SK-N-SH (cell line): ENCODE measurements at regions of chr1 and their contacts with region 1.

Region 1: DNA sequence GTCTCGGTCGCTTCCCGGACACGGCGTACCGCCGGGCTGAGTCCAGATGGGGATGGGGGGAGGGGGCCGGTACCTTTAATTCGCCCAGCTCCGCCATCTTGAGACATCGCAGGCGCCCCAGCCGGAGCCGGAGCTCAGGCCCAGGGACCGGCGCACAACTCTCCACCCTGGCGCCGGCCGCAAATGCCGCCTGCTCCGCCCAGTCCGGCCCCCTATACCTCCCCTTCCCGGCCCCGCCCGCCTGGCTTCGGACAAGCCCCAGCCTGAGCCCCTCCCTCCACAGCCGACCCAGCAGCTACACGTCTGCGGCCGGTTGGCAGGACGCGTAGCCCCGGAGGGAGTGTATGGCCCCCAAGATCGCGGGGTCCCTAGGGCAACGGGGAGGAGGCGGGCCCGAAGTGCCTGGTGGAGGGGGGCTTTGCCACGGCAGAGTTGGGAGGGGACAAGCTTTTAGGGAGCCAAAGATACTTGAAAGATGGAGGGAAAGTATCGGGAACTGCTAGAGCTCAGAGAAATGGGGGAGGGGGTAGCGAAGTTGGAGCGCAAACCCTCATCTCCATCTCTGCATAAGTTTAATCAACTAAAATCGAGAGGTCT is at the start of gene PIAS3:
- DNase-seq: peak; percentile 98
- H3K4me3 ChIP-seq: peak within 1 kb of the TSS; percentile 66 to 83
- H3K27ac ChIP-seq: peak within 1 kb of the TSS; percentile 83 to 95
- H3K4me1 ChIP-seq: peaks cover 8 to 9% of the 10 kb centered on the region in 2 experiments; a peak in 3 of 4 replicates
- H3K27me3 ChIP-seq: no peaks in the 10 kb centered on the region
- CTCF ChIP-seq: no peak
- EP300 ChIP-seq: peak in 1 of 2 experiments; percentile 3; a peak in 1 of 4 replicates
- RAD21 ChIP-seq: no peak
- polyA plus RNA-seq, gene PIAS3: 35.5 and 39.1 TPM in 2 replicates

Region 2: DNA sequence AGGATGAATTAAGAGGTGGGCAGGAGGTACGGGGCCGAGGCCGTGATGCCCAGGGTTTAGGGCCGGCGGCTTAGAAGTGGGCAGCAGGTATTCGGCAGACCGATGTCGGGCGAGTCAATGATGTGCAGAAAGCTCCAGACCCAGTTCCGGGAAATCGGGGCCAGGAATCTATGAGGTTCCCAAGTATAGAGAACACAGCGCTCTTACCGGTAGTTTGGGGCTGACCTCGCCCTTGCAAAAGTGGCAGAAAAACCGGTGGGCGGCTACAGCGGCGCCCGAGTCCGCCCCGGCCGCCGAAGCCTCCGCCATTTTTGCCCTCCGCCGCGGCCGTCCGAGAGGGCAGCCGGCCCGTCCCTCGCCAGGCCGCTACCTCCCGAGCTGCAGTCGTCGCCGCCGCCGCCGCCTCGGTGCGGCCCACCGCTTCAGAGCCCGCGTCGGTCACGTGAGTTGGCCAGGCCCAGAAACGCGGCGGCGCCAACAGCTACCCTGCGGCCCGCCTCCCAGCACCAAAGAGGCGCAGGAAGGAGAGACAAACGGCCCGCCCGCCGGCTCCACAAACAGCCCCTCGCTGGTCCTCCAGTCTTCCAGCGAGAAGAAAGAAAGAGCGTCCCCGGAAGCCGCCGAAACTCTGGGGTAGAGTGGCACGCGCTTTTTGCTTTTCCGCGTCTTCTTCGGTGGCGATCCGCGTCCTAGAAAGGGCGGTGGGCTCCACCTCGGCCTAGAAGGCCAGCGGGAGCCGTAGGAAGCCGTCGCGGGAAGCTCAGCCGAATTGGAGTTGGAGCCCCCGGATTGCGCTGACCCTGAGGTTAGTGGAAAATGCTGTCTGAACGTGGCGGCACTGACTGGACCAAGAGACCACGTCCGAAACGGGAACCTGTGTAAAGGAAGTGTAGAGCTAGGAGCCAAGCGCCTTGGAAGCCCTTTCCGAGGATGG is 35.2 kb before region 1 on chr1 and contains the starts of genes POLR3C and RNF115:
- CTCF ChIA-PET with region 1: no interaction called
- POLR2A ChIA-PET with region 1: interaction called, 12 read pairs
- DNase-seq: peak; percentile 91
- H3K4me3 ChIP-seq: peak within 1 kb of the TSS; percentile 90 to 99
- H3K27ac ChIP-seq: peak within 1 kb of the TSS; percentile 92 to 98
- H3K4me1 ChIP-seq: peaks cover 0 to 12% of the 10 kb centered on the region in 2 experiments; a peak in 2 of 4 replicates
- H3K27me3 ChIP-seq: no peaks in the 10 kb centered on the region
- CTCF ChIP-seq: no peak
- EP300 ChIP-seq: peak; percentile 24 to 34; a peak in 2 of 4 replicates
- RAD21 ChIP-seq: no peak
- polyA plus RNA-seq, gene POLR3C: 34.1 and 40.9 TPM in 2 replicates
- polyA plus RNA-seq, gene RNF115: 4.8 and 6.1 TPM in 2 replicates

Region 3: DNA sequence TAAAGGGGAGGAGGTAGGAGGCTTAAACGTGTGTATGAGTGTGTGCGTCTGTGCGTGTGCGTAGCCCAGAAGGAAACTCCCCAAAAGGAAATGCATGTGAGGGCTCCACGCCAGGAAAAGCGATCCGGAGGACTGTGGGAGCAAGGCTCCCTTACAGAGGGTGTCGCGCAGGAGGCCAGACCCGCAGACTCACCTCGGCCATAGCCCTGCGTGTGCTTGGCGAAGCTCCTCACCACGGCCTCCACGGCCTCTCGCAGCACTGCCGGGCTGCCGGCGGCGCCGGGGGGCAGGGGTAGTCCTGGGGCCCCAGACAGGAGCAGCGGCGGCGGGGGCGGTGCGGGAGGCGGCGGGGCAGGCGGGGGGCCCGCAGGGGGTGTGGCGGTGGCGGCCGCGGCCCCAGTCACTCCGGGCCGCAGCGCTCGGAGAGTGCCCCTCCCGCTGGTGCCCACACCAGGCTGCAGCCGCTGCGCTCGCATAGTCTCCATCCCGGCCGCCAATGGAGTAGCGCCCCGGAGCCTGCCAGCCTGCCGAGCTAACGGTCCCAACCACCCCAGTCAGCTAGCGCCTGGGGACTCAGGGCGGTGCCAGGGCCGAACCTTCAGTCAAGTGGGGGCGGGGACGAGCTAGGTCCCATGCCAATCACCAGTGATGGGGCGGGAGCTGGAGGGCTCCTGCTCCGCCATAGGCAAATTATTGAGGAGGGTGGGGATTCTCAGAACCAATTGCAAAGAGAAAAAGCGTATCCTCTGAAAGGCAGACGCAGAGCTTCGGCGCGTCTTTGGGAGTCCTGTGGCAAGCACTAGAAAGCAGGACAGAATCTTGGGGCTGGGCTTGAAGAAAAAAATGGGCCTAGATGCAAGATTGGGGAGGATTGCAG is 98.7 kb after region 1 on chr1 and contains the start of gene LIX1L:
- CTCF ChIA-PET with region 1: interaction called, 4 read pairs
- POLR2A ChIA-PET with region 1: interaction called, 10 read pairs
- DNase-seq: peak; percentile 95
- H3K4me3 ChIP-seq: peak within 1 kb of the TSS; percentile 62 to 74
- H3K27ac ChIP-seq: peak within 1 kb of the TSS; percentile 82 to 99
- H3K4me1 ChIP-seq: peaks cover 26 to 52% of the 10 kb centered on the region in 2 experiments
- H3K27me3 ChIP-seq: no peaks in the 10 kb centered on the region
- CTCF ChIP-seq: no peak
- EP300 ChIP-seq: no peak; a peak in 1 of 4 replicates
- RAD21 ChIP-seq: no peak
- polyA plus RNA-seq, gene LIX1L: 39.1 and 39.4 TPM in 2 replicates